ENCODE measurements at regions of chr1 and their contacts with region 1.

Region 1: GRCh38 chr1:192477630-192478029 is 97.9 kb upstream of the RGS1 start:
- DNase-seq: no peak
- ATAC-seq: peak; percentile 73
- H3K4me3 ChIP-seq: no peak overlapping the region
- H3K27ac ChIP-seq: no peak overlapping the region
- H3K4me1 ChIP-seq: no peaks in the 10 kb centered on the region
- H3K27me3 ChIP-seq: no peaks in the 10 kb centered on the region
- CTCF ChIP-seq: peak in 2 of 3 experiments; percentile 66 to 82; a peak in 4 of 6 replicates
- POLR2A ChIP-seq: no peak
- RAD21 ChIP-seq: peak; percentile 88

Region 2: DNA sequence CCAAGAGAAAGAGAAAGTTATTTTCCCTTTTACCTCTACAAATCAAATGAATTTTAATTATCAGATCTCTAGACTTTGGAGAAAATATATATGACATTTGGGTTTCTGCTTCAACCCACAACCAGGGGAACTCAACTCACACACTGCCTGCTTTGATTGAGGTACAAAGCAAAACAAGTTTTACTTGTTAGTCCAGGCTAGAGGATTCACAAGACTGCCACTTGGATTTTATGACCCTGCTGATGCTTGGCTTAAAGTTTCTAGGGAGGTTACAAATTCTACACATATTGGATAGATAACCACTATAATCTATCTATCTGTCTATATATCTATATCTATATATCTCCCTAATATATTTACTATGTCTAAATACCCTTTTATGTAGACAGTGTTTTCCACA is 786.7 kb before region 1 on chr1:
- CTCF ChIA-PET with region 1: no interaction called
- POLR2A ChIA-PET with region 1: no interaction called
- RAD21 ChIA-PET with region 1: no interaction called
- intact Hi-C with region 1: no loop called
- DNase-seq: no peak
- ATAC-seq: no peak
- H3K4me3 ChIP-seq: no peak overlapping the region
- H3K27ac ChIP-seq: no peak overlapping the region
- H3K4me1 ChIP-seq: no peaks in the 10 kb centered on the region
- H3K27me3 ChIP-seq: no peaks in the 10 kb centered on the region
- CTCF ChIP-seq: no peak
- POLR2A ChIP-seq: no peak
- RAD21 ChIP-seq: no peak

Region 3: DNA sequence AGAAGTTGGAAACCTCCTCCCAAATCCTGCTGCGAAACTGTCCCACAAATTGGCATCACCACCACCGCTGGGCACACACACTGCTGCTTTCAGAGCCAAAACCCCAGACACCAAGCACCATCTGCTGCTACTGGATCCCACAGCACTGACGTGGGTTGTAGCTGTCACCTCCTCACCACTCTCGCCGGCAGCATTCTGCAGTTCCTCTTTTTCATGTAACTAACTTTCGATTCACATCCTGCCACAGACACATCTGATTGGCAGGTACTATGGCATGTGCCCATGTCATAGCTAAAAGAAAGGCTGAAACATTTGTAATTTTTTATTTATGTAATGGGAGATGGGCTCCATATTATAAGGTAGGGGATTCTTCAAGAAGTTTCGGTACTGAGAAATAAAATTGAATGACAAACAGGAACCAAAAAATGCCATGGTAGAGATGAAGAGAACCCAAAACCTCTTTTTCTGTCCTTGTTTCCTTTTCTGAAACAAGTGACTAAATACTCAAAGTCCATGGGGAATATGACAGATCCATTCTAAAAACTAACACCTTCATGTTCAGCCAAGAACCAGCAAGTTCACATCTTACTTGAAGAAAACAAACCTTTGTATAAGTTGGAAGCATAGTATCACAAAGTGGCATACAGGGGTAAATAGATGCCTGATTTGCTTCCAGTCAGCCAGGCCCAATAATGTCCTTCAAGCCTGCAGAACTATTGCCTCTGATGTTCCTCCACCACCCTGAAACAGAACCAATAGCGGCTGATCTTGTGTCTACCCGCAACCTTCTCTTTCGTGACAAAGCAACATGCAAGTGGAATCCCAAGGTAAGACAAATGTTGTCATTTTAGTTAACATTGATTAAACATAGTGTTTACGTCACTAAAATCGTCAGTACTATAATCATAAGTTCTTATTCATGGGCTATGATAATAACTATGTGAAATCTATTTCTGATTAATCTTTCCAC is 131.8 kb after region 1 on chr1:
- CTCF ChIA-PET with region 1: interaction called, 42 read pairs
- POLR2A ChIA-PET with region 1: interaction called, 4 read pairs
- RAD21 ChIA-PET with region 1: interaction called, 4 to 11 read pairs
- intact Hi-C with region 1: loop called (anchors 1 kb)
- DNase-seq: no peak
- ATAC-seq: no peak
- H3K4me3 ChIP-seq: no peak overlapping the region
- H3K27ac ChIP-seq: no peak overlapping the region
- H3K4me1 ChIP-seq: peaks cover 0 to 4% of the 10 kb centered on the region in 2 experiments; a peak in 1 of 4 replicates
- H3K27me3 ChIP-seq: no peaks in the 10 kb centered on the region
- CTCF ChIP-seq: no peak
- POLR2A ChIP-seq: no peak
- RAD21 ChIP-seq: no peak

Region 4: GRCh38 chr1:193019442-193020026 is 541.9 kb after region 1 on chr1:
- CTCF ChIA-PET with region 1: interaction called, 37 read pairs
- POLR2A ChIA-PET with region 1: no interaction called
- RAD21 ChIA-PET with region 1: interaction called in 1 of 2 experiments, 3 read pairs
- intact Hi-C with region 1: loop called (anchors 1 kb)
- DNase-seq: peak; percentile 49
- ATAC-seq: peak; percentile 78
- H3K4me3 ChIP-seq: no peak overlapping the region
- H3K27ac ChIP-seq: no peak overlapping the region
- H3K4me1 ChIP-seq: no peaks in the 10 kb centered on the region; a peak in 1 of 4 replicates
- H3K27me3 ChIP-seq: no peaks in the 10 kb centered on the region
- CTCF ChIP-seq: peak; percentile 37 to 82 (median 72); a peak in 5 of 6 replicates
- POLR2A ChIP-seq: no peak
- RAD21 ChIP-seq: peak; percentile 88

Region 5: DNA sequence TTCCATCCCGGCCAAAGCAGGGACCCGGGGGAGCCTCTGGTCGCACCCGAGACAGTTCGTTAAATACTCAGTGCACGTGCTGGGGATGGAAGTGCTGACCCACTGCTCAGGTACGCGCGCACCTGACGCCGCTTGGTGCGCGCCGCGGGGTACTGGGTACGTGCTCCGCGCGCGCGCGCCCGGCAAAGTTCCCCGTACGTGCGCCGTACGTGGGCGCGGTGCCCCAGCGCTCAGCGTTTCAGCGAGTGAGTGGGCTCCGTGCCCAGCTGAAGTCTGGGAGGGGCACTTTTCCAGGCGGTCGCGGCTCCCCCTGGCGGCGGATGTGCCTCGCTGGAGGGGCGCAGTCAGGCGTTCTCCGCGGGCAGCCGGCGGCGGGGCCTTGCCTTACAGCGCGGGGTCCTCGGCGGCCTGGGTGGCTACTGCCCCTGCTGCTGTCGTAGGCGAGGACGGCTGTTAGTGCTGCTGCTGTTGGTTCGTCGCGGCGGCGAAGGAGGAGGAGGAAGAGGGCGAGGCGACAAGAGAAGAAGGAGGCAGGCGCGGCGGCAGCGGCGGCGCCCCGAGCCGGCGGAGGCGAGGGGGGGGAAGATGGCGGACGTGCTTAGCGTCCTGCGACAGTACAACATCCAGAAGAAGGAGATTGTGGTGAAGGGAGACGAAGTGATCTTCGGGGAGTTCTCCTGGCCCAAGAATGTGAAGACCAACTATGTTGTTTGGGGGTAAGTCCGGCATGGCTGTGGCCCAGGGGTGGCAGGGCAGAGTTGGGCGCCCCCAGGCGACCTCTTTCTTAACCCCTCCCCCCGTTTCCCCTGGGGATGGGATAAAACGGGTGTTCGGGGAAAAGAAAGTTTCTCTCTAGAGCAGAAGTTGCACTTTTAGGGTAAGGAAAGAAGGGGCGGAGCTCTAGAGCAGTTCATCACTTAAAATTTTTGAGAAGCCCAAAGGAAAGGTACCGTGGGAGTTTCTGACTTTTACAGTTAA is 644.3 kb after region 1 on chr1 and contains the start of gene CDC73:
- CTCF ChIA-PET with region 1: interaction called, 3 read pairs
- POLR2A ChIA-PET with region 1: no interaction called
- RAD21 ChIA-PET with region 1: no interaction called
- intact Hi-C with region 1: loop called (anchors 10 kb)
- DNase-seq: peak; percentile 95
- ATAC-seq: peak; percentile 92
- H3K4me3 ChIP-seq: peak within 1 kb of the TSS; percentile 76 to 88
- H3K27ac ChIP-seq: peak within 1 kb of the TSS; percentile 92
- H3K4me1 ChIP-seq: peaks cover 7 to 17% of the 10 kb centered on the region in 2 experiments
- H3K27me3 ChIP-seq: no peaks in the 10 kb centered on the region
- CTCF ChIP-seq: peak; percentile 81 to 96 (median 95)
- POLR2A ChIP-seq: peak; percentile 78
- RAD21 ChIP-seq: peak; percentile 96
- total RNA-seq, gene CDC73: 63.2 TPM

Measured in HCT116 (cell line).